Sciatic nerve (tissue), 2 donors: ENCODE measurements at regions of chr1 and their contacts with region 1.

Region 1: DNA sequence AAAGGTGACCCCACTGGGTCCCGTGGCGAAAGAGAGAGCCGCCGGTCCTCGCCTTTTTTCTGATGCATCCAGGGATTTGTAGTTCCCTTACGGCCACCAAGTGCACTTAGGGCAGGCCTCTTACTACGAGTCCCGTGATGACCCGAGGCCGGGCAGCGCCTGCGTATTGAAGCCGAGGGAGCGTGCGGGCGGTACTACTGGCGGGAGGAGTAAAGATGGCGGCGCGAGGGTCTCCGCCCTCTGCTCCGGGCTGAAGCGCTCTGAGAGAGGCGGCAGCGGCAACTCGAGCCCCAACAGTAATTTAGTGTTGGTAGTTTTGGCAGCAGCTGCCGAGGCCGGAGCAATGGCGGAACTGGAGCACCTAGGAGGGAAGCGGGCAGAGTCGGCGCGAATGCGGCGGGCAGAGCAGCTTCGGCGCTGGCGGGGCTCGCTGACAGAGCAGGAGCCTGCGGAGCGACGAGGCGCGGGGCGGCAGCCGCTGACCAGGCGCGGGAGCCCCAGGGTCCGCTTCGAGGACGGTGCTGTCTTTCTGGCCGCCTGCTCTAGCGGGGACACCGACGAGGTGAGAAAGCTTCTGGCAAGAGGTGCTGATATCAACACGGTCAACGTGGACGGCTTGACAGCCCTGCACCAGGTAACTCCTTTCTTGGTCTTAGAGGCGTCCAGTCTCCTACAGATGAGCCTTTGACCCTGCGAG is at the start of gene PPP1R12B:
- DNase-seq: peak; percentile 97
- ATAC-seq: peak; percentile 100
- total RNA-seq, gene PPP1R12B: 271 TPM

Region 2: DNA sequence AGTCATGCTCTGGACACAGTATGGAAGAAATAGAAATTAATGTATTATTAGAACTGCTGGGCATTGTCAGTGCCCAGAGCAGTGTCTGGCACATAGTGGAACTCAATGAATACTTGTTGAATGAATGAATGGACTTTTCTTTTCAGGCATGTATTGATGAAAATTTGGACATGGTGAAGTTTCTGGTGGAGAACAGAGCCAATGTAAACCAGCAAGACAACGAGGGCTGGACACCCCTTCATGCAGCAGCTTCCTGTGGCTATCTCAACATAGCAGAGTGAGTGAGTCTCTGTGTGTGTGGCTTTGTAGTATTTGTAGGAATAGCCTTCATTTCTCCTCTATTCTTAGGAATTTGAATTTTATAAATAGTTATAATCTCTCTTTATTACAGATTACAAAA is 68.0 kb after region 1 on chr1:
- intact Hi-C with region 1: no loop called
- DNase-seq: no peak
- ATAC-seq: no peak

Region 3: DNA sequence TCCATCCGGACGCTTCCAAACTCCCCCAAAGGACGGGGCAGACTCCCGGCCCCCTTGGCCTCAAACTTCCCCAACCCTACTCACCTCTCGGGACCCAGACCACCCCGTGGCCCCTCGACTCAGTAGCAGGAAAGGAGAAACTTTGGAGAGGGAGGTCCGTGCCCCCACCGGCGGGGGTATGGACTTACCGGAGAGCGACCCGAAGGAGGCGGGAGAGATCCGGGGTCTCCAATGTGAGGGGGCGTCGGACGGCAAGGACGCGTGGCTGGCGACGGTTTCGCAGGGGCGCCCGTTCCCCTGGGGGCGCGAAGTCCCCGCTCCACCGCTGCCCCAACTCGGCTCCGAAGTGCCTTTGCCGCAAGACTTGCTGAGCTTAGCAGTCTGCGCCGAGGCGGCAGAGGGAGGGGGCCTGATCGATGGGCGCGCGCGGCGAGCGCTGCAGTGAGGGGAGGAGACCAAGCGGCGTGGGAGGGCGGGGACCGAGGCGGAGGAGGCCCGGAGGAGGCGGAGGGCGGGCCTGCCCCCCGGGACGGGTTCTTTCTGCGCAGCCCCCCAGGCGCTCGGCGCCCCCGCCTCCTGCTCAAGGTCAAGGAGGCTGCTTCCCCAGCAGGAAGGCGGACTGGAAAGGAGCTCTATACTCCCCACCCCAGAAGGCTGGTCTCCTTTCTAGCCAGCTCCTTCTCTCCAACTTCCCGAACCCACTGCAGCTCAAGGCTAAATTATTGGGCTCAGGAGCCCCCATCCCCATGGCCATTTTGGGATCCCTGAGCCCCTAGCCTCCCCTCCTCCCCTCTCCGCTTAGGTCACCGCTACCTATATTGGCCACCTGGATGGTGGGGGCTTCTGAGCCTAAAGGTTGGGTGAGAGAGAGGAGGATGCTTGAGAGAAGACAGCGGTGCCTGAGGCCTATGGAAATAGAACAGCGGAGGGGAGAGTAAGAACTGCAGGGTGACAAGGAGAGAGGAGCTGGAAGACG is 361.7 kb after region 1 on chr1 and contains the start of gene SYT2:
- intact Hi-C with region 1: loop called (anchors 10 kb)
- DNase-seq: peak; percentile 63
- ATAC-seq: peak; percentile 58
- total RNA-seq, gene SYT2: not detected